ENCODE measurements at regions of chr6 and their contacts with region 1.

Region 1: DNA sequence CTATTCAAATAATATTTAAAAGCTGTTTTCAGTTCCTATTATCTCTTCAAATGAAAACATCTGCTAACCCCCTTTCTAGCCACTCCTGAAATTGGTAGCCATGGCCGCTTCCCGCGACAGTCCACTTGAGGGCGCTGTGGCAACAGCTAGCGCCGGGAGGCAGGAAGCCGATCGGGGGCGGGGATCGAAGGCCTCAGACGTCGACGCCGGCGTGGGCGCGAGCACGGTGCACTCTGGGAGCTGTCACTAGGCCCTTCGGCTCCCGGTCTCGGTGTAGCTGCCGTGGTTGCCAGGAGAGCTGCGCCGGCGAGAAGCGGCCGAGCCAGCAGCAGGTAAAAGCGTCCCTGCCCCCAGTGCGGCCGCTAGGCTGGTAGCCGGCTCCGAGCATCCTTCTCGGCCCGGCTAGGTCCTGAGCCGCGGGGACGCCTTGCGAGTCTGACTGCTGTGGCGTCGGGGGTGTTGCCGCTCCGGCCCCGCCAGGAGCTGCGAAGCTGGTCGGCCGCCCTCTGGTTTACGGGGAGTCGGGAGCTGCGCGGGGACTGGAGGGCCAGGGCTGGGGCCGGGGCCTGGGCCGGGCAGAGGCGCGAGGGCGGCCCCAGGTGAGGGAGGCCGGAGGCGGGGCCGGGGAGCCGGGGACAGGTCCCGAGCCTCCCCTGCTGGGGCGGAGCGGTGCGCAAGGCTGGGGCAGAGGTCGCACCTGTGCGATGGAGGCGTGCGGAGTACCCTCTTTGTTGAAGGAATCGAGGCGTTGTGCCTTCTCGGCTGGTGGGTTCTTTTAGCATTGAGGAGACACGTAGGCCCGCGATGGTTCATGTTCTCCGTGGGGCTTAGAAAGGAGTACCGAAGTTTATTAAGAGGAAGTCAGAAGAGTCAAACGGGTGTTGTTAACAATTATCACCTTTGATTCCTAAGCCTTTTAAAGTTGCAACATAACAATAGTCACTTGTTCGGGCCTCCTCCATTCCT is at the start of gene DOP1A:
- DNase-seq: peak; percentile 70
- H3K4me3 ChIP-seq: peak within 1 kb of the TSS; percentile 80 to 99 (median 92)
- H3K27ac ChIP-seq: peak within 1 kb of the TSS; percentile 95 to 97 (median 96)
- H3K4me1 ChIP-seq: peaks cover 5 to 62% (median 29%) of the 10 kb centered on the region in 3 donors
- H3K27me3 ChIP-seq: no peaks in the 10 kb centered on the region
- CTCF ChIP-seq: peak; percentile 91 to 99 (median 96)
- POLR2A ChIP-seq: peak in 3 of 4 donors; percentile 27 to 69 (median 53)
- total RNA-seq, gene DOP1A: 19.0 to 40.2 (median 22.4) TPM

Region 2: DNA sequence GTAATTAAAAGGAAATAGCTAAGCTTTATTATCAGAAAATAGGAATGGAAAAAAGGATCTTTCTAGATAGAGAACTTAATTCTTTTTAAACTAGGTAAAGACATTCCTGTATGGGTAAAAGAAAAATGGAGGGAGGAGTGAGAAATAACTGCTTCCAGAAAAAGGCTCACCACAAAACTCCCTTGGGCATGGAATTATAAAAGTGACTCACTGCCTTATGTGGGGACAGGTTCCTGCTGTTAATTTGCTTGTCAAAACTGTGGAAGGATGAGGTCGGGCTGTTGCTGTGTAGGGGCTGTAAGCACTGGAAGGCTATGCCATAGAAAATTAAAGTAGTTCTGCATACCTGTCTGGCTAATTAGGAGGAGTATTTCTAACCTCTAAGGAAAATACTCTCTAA is 160.8 kb before region 1 on chr6:
- intact Hi-C with region 1: no loop called
- DNase-seq: no peak
- H3K4me3 ChIP-seq: no peak overlapping the region
- H3K27ac ChIP-seq: no peak overlapping the region
- H3K4me1 ChIP-seq: peaks cover 0 to 11% (median 4%) of the 10 kb centered on the region in 3 donors
- H3K27me3 ChIP-seq: no peaks in the 10 kb centered on the region
- CTCF ChIP-seq: no peak
- POLR2A ChIP-seq: no peak

Region 3: GRCh38 chr6:83176246-83176645 is 108.5 kb after region 1 on chr6:
- intact Hi-C with region 1: no loop called
- DNase-seq: no peak
- H3K4me3 ChIP-seq: no peak overlapping the region
- H3K27ac ChIP-seq: no peak overlapping the region
- H3K4me1 ChIP-seq: no peaks in the 10 kb centered on the region
- H3K27me3 ChIP-seq: no peaks in the 10 kb centered on the region
- CTCF ChIP-seq: no peak
- POLR2A ChIP-seq: no peak

Region 4: GRCh38 chr6:83192871-83193746 is 125.4 kb after region 1 on chr6 and contains the starts of genes PGM3 and RWDD2A:
- intact Hi-C with region 1: loop called (anchors 10 kb)
- DNase-seq: peak; percentile 39
- H3K4me3 ChIP-seq: peak within 1 kb of the TSS; percentile 88 to 96 (median 92)
- H3K27ac ChIP-seq: peak within 1 kb of the TSS; percentile 81 to 91 (median 86)
- H3K4me1 ChIP-seq: peaks cover 3 to 31% (median 13%) of the 10 kb centered on the region in 3 donors
- H3K27me3 ChIP-seq: no peaks in the 10 kb centered on the region
- CTCF ChIP-seq: no peak
- POLR2A ChIP-seq: peak in 3 of 4 donors; percentile 61 to 86 (median 68)
- total RNA-seq, gene PGM3: 10.9 to 20.6 (median 16.9) TPM
- total RNA-seq, gene RWDD2A: 0.57 to 3.1 (median 0.91) TPM

Measured in esophagus squamous epithelium (tissue), 5 donors.